Ascending aorta (tissue), 2 donors: ENCODE measurements at regions of chr5 and their contacts with region 1.

Region 1: GRCh38 chr5:140346348-140347101 is at the start of gene HBEGF:
- DNase-seq: peak; percentile 27 to 90
- H3K4me3 ChIP-seq: peak within 1 kb of the TSS; percentile 69 to 93
- H3K27ac ChIP-seq: peak within 1 kb of the TSS; percentile 75 to 80
- H3K4me1 ChIP-seq: peaks cover 0 to 22% of the 10 kb centered on the region in 2 donors
- H3K27me3 ChIP-seq: no peaks in the 10 kb centered on the region
- CTCF ChIP-seq: peak; percentile 31 to 55 (median 50)
- total RNA-seq, gene HBEGF: 3.0 TPM

Region 2: GRCh38 chr5:140107312-140108083 is 239.0 kb before region 1 on chr5:
- intact Hi-C with region 1: loop called (anchors 5 kb)
- DNase-seq: peak; percentile 46 to 94
- H3K4me3 ChIP-seq: peak overlapping the region; percentile 73 to 85
- H3K27ac ChIP-seq: peak overlapping the region; percentile 96 to 97
- H3K4me1 ChIP-seq: peaks cover 3 to 17% of the 10 kb centered on the region in 2 donors
- H3K27me3 ChIP-seq: no peaks in the 10 kb centered on the region
- CTCF ChIP-seq: peak in 2 of 3 experiments; percentile 25 to 37

Region 3: GRCh38 chr5:140261403-140262171 is 84.9 kb before region 1 on chr5:
- intact Hi-C with region 1: loop called (anchors 5 kb)
- DNase-seq: peak; percentile 57 to 90
- H3K4me3 ChIP-seq: no peak overlapping the region
- H3K27ac ChIP-seq: peak overlapping the region; percentile 53 to 63
- H3K4me1 ChIP-seq: peaks cover 0 to 5% of the 10 kb centered on the region in 2 donors
- H3K27me3 ChIP-seq: no peaks in the 10 kb centered on the region
- CTCF ChIP-seq: peak in 1 of 3 experiments; percentile 13

Region 4: GRCh38 chr5:140302786-140303639 is 43.5 kb before region 1 on chr5 and contains the start of gene PFDN1:
- intact Hi-C with region 1: loop called (anchors 2 kb)
- DNase-seq: peak; percentile 69 to 96
- H3K4me3 ChIP-seq: peak within 1 kb of the TSS; percentile 82 to 95
- H3K27ac ChIP-seq: peak within 1 kb of the TSS; percentile 79 to 84
- H3K4me1 ChIP-seq: peaks cover 6 to 20% of the 10 kb centered on the region in 2 donors
- H3K27me3 ChIP-seq: no peaks in the 10 kb centered on the region
- CTCF ChIP-seq: no peak
- total RNA-seq, gene PFDN1: 135 TPM